CD14-positive monocyte (primary cell): ENCODE measurements at regions of chr17 and their contacts with region 1.

Region 1: DNA sequence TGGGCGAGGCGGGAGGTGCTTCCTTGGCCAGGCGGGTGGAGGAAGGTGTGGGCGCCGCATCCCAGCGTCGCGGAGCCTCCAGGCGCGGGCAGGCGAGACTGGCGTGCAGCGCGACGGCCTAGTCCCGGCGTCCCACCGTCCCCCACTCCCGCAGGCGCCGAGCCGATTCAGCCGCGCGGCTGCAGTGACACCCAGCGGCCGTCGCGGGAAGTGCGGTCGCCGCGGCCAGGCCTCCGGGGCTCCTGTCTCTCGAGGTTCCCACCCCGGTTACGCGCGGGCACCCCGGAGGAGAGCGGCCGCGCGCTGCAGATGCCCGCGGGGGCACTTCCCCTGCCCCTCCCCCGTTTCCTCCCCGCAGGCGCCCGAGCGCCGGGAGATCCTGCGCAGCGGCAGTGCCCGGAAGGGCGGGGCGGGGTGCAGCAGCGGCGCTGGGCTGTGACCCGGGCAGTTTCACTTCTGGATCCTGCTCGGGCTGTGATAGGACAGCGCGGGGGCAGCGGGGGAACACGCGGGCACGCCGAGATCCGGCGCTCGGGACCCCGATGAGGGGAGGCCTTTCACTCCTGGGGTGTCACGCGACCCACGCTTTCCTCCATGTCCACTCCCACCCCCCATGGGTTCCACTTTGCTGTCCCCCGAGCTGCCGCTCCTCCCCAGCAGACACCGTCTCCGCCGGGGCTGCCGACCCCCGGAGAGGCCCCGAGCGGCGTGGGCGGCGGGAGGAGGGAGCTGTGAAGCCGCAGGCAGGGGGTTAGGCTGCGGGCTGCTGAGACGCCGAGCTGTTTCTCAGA is 16.6 kb downstream of the GRB7 start:
- DNase-seq: peak; percentile 96 to 98 (median 98)
- H3K4me3 ChIP-seq: peak overlapping the region; percentile 47 to 72 (median 59)
- H3K4me3 Mint-ChIP-seq: peak overlapping the region; percentile 67 to 84
- H3K27ac ChIP-seq: peak overlapping the region; percentile 83 to 97
- H3K27ac Mint-ChIP-seq: peak overlapping the region; percentile 72 to 87 (median 85)
- H3K4me1 ChIP-seq: peaks cover 38 to 41% of the 10 kb centered on the region in 2 donors
- H3K4me1 Mint-ChIP-seq: peaks cover 41% of the 10 kb centered on the region
- H3K27me3 ChIP-seq: no peaks in the 10 kb centered on the region
- H3K27me3 Mint-ChIP-seq: peaks cover 10 to 25% (median 15%) of the 10 kb centered on the region in 3 donors
- CTCF ChIP-seq: peak; percentile 98

Region 2: GRCh38 chr17:39365242-39365641 is 389.1 kb before region 1 on chr17:
- intact Hi-C with region 1: no loop called
- DNase-seq: peak; percentile 24 to 72 (median 54)
- H3K4me3 ChIP-seq: peak overlapping the region in 2 of 3 experiments; percentile 36 to 69
- H3K4me3 Mint-ChIP-seq: peak overlapping the region; percentile 56 to 76
- H3K27ac ChIP-seq: peak overlapping the region in 1 of 2 donors; percentile 81
- H3K27ac Mint-ChIP-seq: peak overlapping the region; percentile 85 to 95 (median 92)
- H3K4me1 ChIP-seq: peaks cover 58 to 62% of the 10 kb centered on the region in 2 donors
- H3K4me1 Mint-ChIP-seq: peaks cover 48% of the 10 kb centered on the region
- H3K27me3 ChIP-seq: no peaks in the 10 kb centered on the region
- H3K27me3 Mint-ChIP-seq: peaks cover 0 to 3% (median 0%) of the 10 kb centered on the region in 3 donors
- CTCF ChIP-seq: no peak

Region 3: DNA sequence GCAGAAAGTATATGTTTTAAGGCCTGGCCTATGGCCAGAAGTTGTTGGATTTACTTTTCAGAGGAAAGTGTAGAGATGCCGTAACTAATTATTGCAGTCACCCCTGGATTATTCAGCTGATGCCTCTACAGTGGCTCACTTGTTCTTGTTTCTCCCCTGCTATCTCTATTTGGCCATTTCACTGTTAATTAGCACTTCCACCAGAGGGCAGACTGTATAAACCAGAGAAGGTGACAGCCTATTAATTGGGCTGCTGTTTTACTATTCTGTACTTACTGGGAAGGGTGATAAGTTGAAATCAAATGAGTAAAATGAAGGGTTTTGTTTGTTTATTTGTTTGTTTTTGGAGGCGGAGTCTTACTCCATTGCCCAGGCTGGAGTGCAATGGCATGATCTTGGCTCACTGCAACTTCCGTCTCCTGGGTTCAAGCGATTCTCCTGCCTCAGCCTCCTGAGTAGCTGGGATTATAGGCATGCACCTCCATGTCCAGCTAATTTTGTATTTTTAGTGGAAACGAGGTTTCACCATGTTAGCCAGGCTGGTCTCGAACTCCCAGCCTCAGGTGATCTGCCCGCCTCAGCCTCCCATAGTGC is 227.0 kb before region 1 on chr17:
- intact Hi-C with region 1: loop called in 1 of 2 experiments (anchors 5 kb)
- DNase-seq: no peak
- H3K4me3 ChIP-seq: no peak overlapping the region
- H3K4me3 Mint-ChIP-seq: no peak overlapping the region
- H3K27ac ChIP-seq: no peak overlapping the region
- H3K27ac Mint-ChIP-seq: no peak overlapping the region
- H3K4me1 ChIP-seq: peaks cover under 1 to 2% of the 10 kb centered on the region in 2 donors
- H3K4me1 Mint-ChIP-seq: no peaks in the 10 kb centered on the region
- H3K27me3 ChIP-seq: no peaks in the 10 kb centered on the region
- H3K27me3 Mint-ChIP-seq: no peaks in the 10 kb centered on the region
- CTCF ChIP-seq: peak; percentile 42

Region 4: DNA sequence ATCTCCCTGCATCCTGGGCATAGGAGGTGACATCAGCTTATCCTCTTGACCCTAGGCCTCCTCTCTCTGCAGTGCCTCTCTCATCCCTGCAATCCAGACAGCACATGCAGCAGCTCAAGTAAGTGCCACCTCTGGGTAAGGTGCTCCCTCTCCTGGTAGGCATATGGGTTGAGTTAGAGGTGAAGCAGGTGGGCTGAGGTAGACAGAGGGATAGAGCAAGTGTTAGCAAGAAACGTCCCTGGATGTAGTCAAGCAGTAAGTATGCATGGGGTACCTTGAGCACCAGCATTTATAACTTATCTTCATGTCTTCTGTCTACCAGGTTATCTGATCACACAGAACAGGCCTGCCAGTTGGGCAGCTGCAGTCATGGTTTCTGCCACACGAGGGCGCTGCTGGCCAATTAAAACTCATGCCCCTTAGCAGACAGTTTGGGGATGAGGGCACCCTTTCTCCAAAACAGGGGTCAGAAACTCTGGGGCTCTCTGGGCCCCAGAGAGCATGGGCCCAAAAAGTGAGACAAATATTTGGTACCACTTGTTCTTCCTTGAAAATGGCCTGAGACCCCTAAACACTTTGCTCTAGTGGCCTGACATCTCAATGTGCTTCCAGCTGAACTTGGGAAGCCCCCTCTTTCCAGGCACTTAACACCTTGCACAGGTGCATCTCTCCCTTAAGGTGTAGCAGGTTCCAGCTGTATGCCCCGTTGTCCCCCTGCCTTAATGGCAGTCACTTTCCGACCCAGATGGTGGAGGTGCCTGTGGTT is 206.5 kb before region 1 on chr17:
- intact Hi-C with region 1: loop called (anchors 5 to 10 kb)
- DNase-seq: peak; percentile 46 to 57 (median 54)
- H3K4me3 ChIP-seq: no peak overlapping the region
- H3K4me3 Mint-ChIP-seq: no peak overlapping the region
- H3K27ac ChIP-seq: no peak overlapping the region
- H3K27ac Mint-ChIP-seq: no peak overlapping the region
- H3K4me1 ChIP-seq: peaks cover 3 to 13% of the 10 kb centered on the region in 2 donors
- H3K4me1 Mint-ChIP-seq: peaks cover 18% of the 10 kb centered on the region
- H3K27me3 ChIP-seq: no peaks in the 10 kb centered on the region
- H3K27me3 Mint-ChIP-seq: peaks cover 0 to 2% (median 0%) of the 10 kb centered on the region in 3 donors
- CTCF ChIP-seq: peak; percentile 95

Region 5: DNA sequence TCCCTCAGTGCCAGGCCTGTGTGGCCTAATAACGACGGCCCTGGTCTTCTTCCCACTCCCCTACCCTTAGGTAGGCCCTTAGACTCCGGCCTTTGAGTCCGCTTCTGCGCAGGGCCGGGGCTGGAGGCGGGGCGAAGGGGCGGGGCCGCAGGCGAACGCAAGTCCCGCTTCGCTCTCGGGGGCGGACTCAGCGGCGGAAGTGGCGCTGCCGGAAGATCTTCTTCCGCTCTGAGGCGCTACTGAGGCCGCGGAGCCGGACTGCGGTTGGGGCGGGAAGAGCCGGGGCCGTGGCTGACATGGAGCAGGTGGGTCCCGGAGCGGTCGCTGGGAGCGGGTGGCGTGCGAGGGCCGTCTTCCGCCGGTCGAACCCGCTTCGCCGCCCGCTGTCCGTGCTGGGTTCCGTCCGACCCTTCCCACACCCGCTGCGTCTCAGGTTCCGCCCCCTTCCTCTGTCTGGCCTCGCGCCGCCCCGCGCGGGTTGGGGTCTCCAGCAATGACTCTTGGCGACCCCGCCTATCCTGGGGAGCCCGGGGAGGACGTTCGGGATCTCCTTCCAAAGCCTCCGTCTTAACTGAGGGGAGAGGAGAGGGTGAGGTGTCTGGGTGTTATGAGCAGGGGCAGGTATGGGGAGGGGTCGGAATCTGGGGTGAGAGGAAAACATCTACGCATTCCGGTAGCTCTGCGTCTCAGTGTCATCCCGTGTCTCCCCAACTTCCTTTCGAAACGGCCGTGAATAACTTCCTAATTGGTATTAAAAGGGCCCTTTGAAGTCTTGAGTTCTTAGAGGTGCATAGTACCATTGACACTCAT is 117.2 kb before region 1 on chr17 and contains the start of gene STARD3:
- intact Hi-C with region 1: loop called in 1 of 2 experiments (anchors 5 kb)
- DNase-seq: peak; percentile 84 to 88 (median 85)
- H3K4me3 ChIP-seq: peak within 1 kb of the TSS; percentile 85 to 90 (median 87)
- H3K4me3 Mint-ChIP-seq: peak within 1 kb of the TSS; percentile 87 to 93
- H3K27ac ChIP-seq: peak within 1 kb of the TSS; percentile 71 to 90
- H3K27ac Mint-ChIP-seq: peak within 1 kb of the TSS; percentile 86 to 96 (median 93)
- H3K4me1 ChIP-seq: peaks cover 59 to 71% of the 10 kb centered on the region in 2 donors
- H3K4me1 Mint-ChIP-seq: peaks cover 64% of the 10 kb centered on the region
- H3K27me3 ChIP-seq: peaks cover 0 to 4% of the 10 kb centered on the region in 2 donors
- H3K27me3 Mint-ChIP-seq: peaks cover 4 to 8% (median 8%) of the 10 kb centered on the region in 3 donors
- CTCF ChIP-seq: no peak
- polyA plus RNA-seq, gene STARD3: 35.1 to 114 (median 45.3) TPM

Region 6: DNA sequence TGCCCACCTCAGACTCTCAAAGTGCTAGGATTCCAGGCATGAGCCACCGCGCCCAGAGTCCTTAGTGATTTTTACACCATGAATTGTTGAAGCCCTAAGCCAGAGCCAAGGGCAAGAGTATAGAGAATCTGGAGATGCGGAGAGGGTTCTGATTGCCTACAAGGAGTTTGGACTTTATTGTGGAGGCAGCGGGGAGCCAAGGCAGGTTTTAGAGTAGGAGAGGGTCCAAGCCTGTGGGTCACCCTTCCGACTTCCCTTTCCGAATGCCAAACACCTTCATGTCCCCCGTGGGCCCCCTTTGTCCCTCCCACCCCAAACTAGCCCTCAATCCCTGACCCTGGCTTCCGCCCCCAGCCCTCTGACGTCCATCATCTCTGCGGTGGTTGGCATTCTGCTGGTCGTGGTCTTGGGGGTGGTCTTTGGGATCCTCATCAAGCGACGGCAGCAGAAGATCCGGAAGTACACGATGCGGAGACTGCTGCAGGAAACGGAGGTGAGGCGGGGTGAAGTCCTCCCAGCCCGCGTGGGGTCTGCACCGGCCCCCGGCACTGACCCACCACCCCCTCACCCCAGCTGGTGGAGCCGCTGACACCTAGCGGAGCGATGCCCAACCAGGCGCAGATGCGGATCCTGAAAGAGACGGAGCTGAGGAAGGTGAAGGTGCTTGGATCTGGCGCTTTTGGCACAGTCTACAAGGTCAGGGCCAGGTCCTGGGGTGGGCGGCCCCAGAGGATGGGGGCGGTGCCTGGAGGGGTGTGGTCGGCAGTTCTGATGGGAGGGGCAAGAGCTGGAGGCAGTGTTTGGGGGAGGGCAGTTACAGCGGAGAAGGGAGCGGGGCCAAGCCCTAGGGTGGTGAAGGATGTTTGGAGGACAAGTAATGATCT is 31.1 kb before region 1 on chr17:
- intact Hi-C with region 1: no loop called
- DNase-seq: no peak
- H3K4me3 ChIP-seq: no peak overlapping the region
- H3K4me3 Mint-ChIP-seq: no peak overlapping the region
- H3K27ac ChIP-seq: no peak overlapping the region
- H3K27ac Mint-ChIP-seq: peak overlapping the region in 1 of 7 donors; percentile 66
- H3K4me1 ChIP-seq: peaks cover 0 to 4% of the 10 kb centered on the region in 2 donors
- H3K4me1 Mint-ChIP-seq: peaks cover 3% of the 10 kb centered on the region
- H3K27me3 ChIP-seq: no peaks in the 10 kb centered on the region
- H3K27me3 Mint-ChIP-seq: peaks cover 0 to 5% (median 1%) of the 10 kb centered on the region in 3 donors
- CTCF ChIP-seq: no peak